ENCODE measurements at regions of chr3 and their contacts with region 1.

Region 1: DNA sequence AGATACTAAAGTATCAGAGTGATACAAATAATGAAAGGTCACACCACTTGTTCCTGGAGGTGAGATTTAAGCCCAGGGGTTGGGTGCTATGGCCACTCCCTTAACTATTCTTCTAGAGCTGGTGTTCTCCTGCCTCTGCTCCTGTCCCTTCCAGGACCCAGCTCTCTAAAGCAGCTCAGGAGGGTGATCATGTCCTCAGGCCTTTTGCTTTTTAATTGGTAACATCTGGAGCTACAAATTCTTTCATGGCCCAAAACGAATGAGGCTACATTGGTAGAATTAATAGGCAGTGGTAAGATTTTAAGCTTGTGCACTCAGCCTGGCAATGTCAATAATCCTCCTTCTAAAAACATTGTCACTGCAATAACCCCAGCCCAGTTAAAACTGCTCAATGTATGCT is 38.2 kb upstream of the CNOT10 start:
- DNase-seq: no peak
- H3K4me3 ChIP-seq: no peak overlapping the region
- H3K27ac ChIP-seq: no peak overlapping the region
- H3K4me1 ChIP-seq: no peaks in the 10 kb centered on the region
- H3K27me3 ChIP-seq: no peaks in the 10 kb centered on the region
- CTCF ChIP-seq: no peak

Region 2: GRCh38 chr3:32557643-32558352 is 89.0 kb before region 1 on chr3:
- CTCF ChIA-PET with region 1: no interaction called
- dilution Hi-C with region 1: loop called (anchors 5 kb)
- in situ Hi-C with region 1: no loop called
- intact Hi-C with region 1: no loop called
- DNase-seq: no peak
- H3K4me3 ChIP-seq: no peak overlapping the region
- H3K27ac ChIP-seq: no peak overlapping the region
- H3K4me1 ChIP-seq: no peaks in the 10 kb centered on the region
- H3K27me3 ChIP-seq: no peaks in the 10 kb centered on the region
- CTCF ChIP-seq: no peak

Region 3: DNA sequence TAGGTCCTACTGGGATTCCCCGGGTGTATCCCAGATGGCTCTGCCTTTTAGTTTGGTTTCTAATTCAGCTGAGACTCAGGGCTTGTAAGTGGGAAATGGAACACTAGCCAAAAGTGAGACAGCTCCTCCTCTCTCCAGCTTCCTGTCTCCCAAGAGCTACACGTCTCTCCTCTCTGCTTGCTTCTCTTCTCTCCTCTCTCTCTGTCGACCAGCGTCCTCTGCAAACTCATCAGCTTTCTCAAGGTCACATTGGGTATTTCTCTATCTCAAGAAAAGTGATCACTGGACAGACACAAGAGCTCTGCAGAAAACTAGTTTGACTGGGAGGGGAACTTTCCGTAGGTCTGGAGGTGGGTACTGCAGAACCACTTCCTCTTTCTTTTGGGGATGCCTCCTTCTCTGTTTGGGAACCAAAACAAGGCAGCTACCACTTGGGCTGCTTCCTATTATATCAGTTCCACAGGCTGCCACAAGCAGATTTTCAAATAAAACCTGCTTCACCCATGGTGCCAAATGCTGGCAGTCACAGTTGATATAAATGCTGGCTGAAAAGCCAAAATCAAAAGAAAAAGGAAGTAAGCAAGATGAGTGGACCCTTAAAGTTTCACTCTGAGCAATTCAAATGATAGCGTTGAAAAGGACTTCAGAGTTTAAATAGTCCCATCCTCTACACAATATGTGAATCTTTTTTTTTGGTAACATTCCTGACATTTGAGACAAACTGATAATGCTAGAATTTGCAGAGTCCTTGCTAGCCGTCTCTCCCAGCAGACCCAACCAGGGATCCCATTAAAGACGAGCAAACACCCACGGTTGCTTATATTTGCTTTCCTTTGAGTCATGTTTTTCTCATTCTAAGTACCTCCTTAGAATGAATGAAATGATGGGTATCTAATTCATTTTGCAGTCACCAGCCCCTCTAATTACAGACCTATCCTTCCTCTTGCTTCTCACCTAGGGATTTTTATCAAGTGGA is 68.9 kb before region 1 on chr3:
- CTCF ChIA-PET with region 1: no interaction called
- dilution Hi-C with region 1: no loop called
- in situ Hi-C with region 1: no loop called
- intact Hi-C with region 1: no loop called
- DNase-seq: no peak
- H3K4me3 ChIP-seq: no peak overlapping the region
- H3K27ac ChIP-seq: no peak overlapping the region
- H3K4me1 ChIP-seq: no peaks in the 10 kb centered on the region
- H3K27me3 ChIP-seq: no peaks in the 10 kb centered on the region
- CTCF ChIP-seq: no peak